Activated T-helper 1 cell treated with anti-CD3 and anti-CD28 coated beads, Interleukin-12 subunit alpha, Interleukin-12 subunit beta, Interleukin-2, Interleukin-4 antibody, amounts not matched to agents 30 ng/mL and 10 ng/mL and 1 ng/mL, durations not matched to agents 14 hours and 24 hours and 36 hours (primary cell): ENCODE measurements at regions of chr18 and their contacts with region 1.

Region 1: GRCh38 chr18:59249205-59249774 is 24.0 kb downstream of the RAX start:
- DNase-seq: no peak
- H3K4me3 Mint-ChIP-seq: no peak overlapping the region
- H3K27ac Mint-ChIP-seq: no peak overlapping the region
- H3K4me1 Mint-ChIP-seq: no peaks in the 10 kb centered on the region
- H3K27me3 Mint-ChIP-seq: peaks cover 50% of the 10 kb centered on the region

Region 2: GRCh38 chr18:59402432-59403090 is 153.3 kb after region 1 on chr18:
- intact Hi-C with region 1: loop called (anchors 2 kb)
- DNase-seq: peak; percentile 59
- H3K4me3 Mint-ChIP-seq: no peak overlapping the region
- H3K27ac Mint-ChIP-seq: no peak overlapping the region
- H3K4me1 Mint-ChIP-seq: no peaks in the 10 kb centered on the region
- H3K27me3 Mint-ChIP-seq: peaks cover 5% of the 10 kb centered on the region